Activated CD8-positive, alpha-beta T cell treated with anti-CD3 and anti-CD28 coated beads for 36 hours (primary cell): ENCODE measurements at regions of chr17 and their contacts with region 1.

Region 1: DNA sequence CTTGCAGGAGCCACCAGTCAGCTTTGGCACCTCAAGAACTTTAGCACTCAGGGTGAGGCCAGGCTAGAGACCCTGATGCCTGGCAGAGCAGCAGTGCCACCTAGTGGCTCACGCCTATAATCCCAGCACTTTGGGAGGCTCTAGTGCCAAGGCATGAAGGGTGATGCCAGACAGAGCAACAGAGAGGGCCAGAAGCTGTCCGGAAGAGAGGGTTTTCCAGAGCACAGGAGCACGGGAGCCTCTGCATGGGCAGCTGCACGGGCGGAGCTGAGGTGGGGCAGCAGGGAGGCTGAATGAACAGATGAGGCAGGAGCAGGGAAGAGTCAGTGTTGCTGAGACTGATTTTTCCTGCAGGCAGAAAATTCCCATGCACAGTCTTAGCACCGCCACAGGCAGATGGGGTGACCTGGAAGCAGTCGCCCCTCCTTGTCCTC is 38.9 kb downstream of the MYH3 start:
- DNase-seq: peak; percentile 69
- ATAC-seq: peak; percentile 84
- H3K4me3 Mint-ChIP-seq: no peak overlapping the region
- H3K27ac Mint-ChIP-seq: no peak overlapping the region
- H3K4me1 Mint-ChIP-seq: no peaks in the 10 kb centered on the region
- H3K27me3 Mint-ChIP-seq: peaks cover 2% of the 10 kb centered on the region
- CTCF ChIP-seq: peak; percentile 80

Region 2: GRCh38 chr17:9924735-9925191 is 693.5 kb before region 1 on chr17:
- CTCF ChIA-PET with region 1: interaction called, 17 read pairs
- POLR2A ChIA-PET with region 1: no interaction called
- intact Hi-C with region 1: loop called (anchors 10 kb)
- DNase-seq: no peak
- ATAC-seq: peak; percentile 67
- H3K4me3 Mint-ChIP-seq: no peak overlapping the region
- H3K27ac Mint-ChIP-seq: no peak overlapping the region
- H3K4me1 Mint-ChIP-seq: no peaks in the 10 kb centered on the region
- H3K27me3 Mint-ChIP-seq: no peaks in the 10 kb centered on the region
- CTCF ChIP-seq: peak; percentile 86

Region 3: DNA sequence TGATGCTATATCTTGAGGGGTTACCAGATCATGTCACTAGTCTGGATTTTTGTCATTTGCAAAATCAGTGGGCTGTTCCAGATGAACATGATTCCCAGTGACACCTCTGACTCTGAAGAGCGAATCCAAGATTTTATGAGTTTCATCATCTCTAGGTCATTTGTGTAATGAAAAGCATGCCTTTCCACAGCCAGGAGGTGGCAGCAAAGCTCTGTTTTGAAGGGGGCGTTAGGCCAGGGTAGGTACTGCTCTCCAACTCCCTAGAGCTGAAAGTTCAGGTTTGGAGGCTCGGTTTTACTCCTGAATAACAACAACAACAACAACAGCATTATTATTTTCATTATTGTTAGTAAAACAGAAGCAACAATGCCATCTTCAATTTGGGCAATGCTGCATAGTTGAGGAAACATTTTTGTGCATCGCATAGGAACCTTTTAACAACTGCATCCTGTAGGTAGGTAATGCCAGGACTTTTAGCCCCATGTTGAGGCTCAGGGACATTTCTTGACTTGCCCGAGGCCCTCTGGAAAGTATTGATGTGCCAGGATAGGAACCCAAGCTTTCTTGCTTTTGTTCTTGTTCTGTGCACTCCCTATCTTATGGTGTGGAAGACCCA is 322.4 kb before region 1 on chr17:
- CTCF ChIA-PET with region 1: interaction called, 13 read pairs
- POLR2A ChIA-PET with region 1: no interaction called
- intact Hi-C with region 1: no loop called
- DNase-seq: peak; percentile 55
- ATAC-seq: no peak
- H3K4me3 Mint-ChIP-seq: no peak overlapping the region
- H3K27ac Mint-ChIP-seq: no peak overlapping the region
- H3K4me1 Mint-ChIP-seq: peaks cover 7% of the 10 kb centered on the region
- H3K27me3 Mint-ChIP-seq: peaks cover 5% of the 10 kb centered on the region
- CTCF ChIP-seq: peak; percentile 68

Region 4: GRCh38 chr17:10327640-10328039 is 290.6 kb before region 1 on chr17:
- CTCF ChIA-PET with region 1: interaction called, 96 read pairs
- POLR2A ChIA-PET with region 1: no interaction called
- intact Hi-C with region 1: loop called (anchors 5 kb)
- DNase-seq: peak; percentile 92
- ATAC-seq: peak; percentile 80
- H3K4me3 Mint-ChIP-seq: no peak overlapping the region
- H3K27ac Mint-ChIP-seq: no peak overlapping the region
- H3K4me1 Mint-ChIP-seq: no peaks in the 10 kb centered on the region
- H3K27me3 Mint-ChIP-seq: peaks cover 4% of the 10 kb centered on the region
- CTCF ChIP-seq: peak; percentile 95

Region 5: DNA sequence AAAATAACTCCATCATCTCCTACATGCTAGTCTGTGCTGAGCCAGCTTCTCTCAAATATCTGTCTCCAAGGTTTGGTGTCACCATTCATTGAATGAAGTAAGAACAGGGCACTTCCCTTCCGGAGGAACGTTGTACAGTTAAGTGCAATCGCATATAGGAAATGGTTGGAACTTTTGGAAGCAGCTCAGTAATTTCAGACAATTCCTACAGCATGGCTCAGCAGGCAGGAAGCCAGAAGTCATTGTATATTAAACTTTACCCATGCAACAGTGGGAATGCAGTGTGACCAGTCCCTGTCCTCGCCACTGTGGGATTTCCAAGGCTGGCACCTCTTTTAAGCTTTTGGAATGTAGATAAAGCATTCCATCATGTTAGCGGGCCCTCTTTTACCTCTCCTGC is 17.6 kb before region 1 on chr17:
- CTCF ChIA-PET with region 1: interaction called, 37 read pairs
- POLR2A ChIA-PET with region 1: no interaction called
- intact Hi-C with region 1: no loop called
- DNase-seq: no peak
- ATAC-seq: no peak
- H3K4me3 Mint-ChIP-seq: no peak overlapping the region
- H3K27ac Mint-ChIP-seq: no peak overlapping the region
- H3K4me1 Mint-ChIP-seq: no peaks in the 10 kb centered on the region
- H3K27me3 Mint-ChIP-seq: peaks cover 3% of the 10 kb centered on the region
- CTCF ChIP-seq: no peak

Region 6: DNA sequence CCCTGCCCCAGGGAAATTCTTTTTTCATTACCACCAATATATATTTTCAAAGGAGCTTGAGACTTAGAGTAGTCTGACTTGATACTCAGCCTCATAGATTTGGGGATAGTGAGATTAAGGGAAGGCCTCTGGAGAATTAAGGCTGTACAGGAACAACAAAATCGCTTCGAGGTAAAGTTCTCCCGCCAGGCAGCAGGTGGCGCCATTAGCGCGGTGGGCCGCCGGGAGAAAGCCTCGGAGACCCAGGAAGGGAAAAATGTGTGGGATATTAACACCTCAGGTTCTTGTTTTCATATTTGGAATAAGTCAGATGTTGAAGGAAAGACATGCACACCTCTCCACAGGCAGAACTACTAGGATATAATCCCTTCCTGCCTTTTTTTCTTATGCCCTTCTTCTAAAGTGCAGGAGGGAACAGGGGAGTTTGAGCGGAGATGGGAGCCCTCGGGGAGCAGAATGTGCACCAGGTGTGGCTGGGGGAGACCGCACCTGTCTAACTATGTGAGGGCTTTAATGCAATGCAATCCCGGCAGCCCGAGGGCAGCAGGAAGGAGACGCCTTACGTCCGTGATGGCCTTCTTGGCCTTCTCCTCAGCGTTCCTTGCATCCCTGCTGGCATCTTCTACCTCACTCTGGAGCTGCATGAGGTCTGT is 13.0 kb after region 1 on chr17:
- CTCF ChIA-PET with region 1: interaction called, 177 read pairs
- POLR2A ChIA-PET with region 1: no interaction called
- intact Hi-C with region 1: no loop called
- DNase-seq: peak; percentile 16
- ATAC-seq: no peak
- H3K4me3 Mint-ChIP-seq: no peak overlapping the region
- H3K27ac Mint-ChIP-seq: no peak overlapping the region
- H3K4me1 Mint-ChIP-seq: no peaks in the 10 kb centered on the region
- H3K27me3 Mint-ChIP-seq: no peaks in the 10 kb centered on the region
- CTCF ChIP-seq: peak; percentile 91

Region 7: GRCh38 chr17:10646392-10646990 is 28.3 kb after region 1 on chr17:
- CTCF ChIA-PET with region 1: interaction called, 177 read pairs
- POLR2A ChIA-PET with region 1: no interaction called
- intact Hi-C with region 1: no loop called
- DNase-seq: peak; percentile 77
- ATAC-seq: peak; percentile 79
- H3K4me3 Mint-ChIP-seq: no peak overlapping the region
- H3K27ac Mint-ChIP-seq: no peak overlapping the region
- H3K4me1 Mint-ChIP-seq: no peaks in the 10 kb centered on the region
- H3K27me3 Mint-ChIP-seq: no peaks in the 10 kb centered on the region
- CTCF ChIP-seq: peak; percentile 89

Region 8: GRCh38 chr17:10666906-10667305 is 48.7 kb after region 1 on chr17:
- CTCF ChIA-PET with region 1: no interaction called
- POLR2A ChIA-PET with region 1: no interaction called
- intact Hi-C with region 1: no loop called
- DNase-seq: no peak
- ATAC-seq: no peak
- H3K4me3 Mint-ChIP-seq: no peak overlapping the region
- H3K27ac Mint-ChIP-seq: no peak overlapping the region
- H3K4me1 Mint-ChIP-seq: no peaks in the 10 kb centered on the region
- H3K27me3 Mint-ChIP-seq: no peaks in the 10 kb centered on the region
- CTCF ChIP-seq: no peak

Region 9: DNA sequence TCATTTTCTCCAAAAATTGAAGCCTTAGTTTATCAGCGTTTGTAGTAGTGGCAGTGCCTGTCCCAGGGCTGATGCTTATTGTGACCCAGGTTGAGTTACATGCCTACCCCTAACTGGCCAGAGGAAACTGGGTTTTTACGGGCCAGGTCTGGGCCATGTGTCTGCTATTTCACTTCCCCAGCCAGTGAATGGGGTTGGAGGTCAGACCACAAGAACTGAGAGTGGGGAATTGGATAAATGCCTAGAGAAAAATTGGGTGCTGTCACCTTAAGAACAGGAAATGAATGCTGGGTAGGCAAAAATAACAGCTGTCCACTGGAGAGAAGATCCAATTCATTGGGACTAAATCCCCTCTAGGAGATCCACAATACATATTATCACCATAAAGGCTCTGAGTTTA is 84.4 kb after region 1 on chr17:
- CTCF ChIA-PET with region 1: no interaction called
- POLR2A ChIA-PET with region 1: no interaction called
- intact Hi-C with region 1: no loop called
- DNase-seq: no peak
- ATAC-seq: no peak
- H3K4me3 Mint-ChIP-seq: peak overlapping the region; percentile 5
- H3K27ac Mint-ChIP-seq: peak overlapping the region; percentile 66
- H3K4me1 Mint-ChIP-seq: peaks cover 60% of the 10 kb centered on the region
- H3K27me3 Mint-ChIP-seq: no peaks in the 10 kb centered on the region
- CTCF ChIP-seq: no peak